Lower lobe of right lung (tissue), 2 donors: ENCODE measurements at regions of chr19 and their contacts with region 1.

Region 1: GRCh38 chr19:41457241-41457640 is 14.3 kb downstream of the ERICH4 start:
- DNase-seq: no peak
- ATAC-seq: no peak
- H3K4me3 ChIP-seq: no peak overlapping the region
- H3K27ac ChIP-seq: peak overlapping the region; percentile 43
- H3K4me1 ChIP-seq: peaks cover 18% of the 10 kb centered on the region
- H3K27me3 ChIP-seq: no peaks in the 10 kb centered on the region
- CTCF ChIP-seq: no peak

Region 2: GRCh38 chr19:41397086-41398049 is 59.9 kb before region 1 on chr19 and contains the starts of genes BCKDHA and EXOSC5:
- intact Hi-C with region 1: no loop called
- DNase-seq: peak; percentile 100
- ATAC-seq: peak; percentile 99 to 100
- H3K4me3 ChIP-seq: peak within 1 kb of the TSS; percentile 76
- H3K27ac ChIP-seq: peak within 1 kb of the TSS; percentile 95
- H3K4me1 ChIP-seq: peaks cover 35% of the 10 kb centered on the region
- H3K27me3 ChIP-seq: no peaks in the 10 kb centered on the region
- CTCF ChIP-seq: no peak
- total RNA-seq, gene BCKDHA: 13.4 TPM
- total RNA-seq, gene EXOSC5: 13.2 TPM

Region 3: GRCh38 chr19:41563854-41564514 is 106.7 kb after region 1 on chr19:
- intact Hi-C with region 1: loop called (anchors 10 kb)
- DNase-seq: no peak
- ATAC-seq: peak; percentile 41 to 45
- H3K4me3 ChIP-seq: peak overlapping the region; percentile 6
- H3K27ac ChIP-seq: no peak overlapping the region
- H3K4me1 ChIP-seq: peaks cover 21% of the 10 kb centered on the region
- H3K27me3 ChIP-seq: peaks cover 39% of the 10 kb centered on the region
- CTCF ChIP-seq: no peak